Common myeloid progenitor, CD34-positive (primary cell): ENCODE measurements at regions of chr15 and their contacts with region 1.

Region 1: DNA sequence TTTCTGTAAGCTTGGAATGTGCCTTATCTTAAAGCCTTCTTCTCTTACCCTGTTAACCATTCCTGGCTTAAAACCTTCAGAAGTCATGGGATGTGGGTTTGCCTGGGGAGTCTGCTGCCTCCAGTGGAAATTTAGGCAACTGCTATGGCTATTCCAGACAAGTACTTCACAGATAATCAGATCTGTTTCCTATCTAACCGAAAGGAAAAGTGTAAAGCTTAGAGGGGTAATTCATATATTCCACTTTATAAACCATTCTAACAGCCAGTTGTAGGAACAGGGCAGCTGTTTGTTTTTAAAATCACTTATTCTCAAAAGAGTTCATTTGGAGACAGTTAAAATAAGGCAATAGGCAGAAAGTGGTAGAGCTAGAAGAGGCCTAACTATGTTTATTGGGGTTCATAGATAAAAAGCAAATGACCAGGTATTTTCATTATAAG is 219.9 kb downstream of the TCF12 start:
- DNase-seq: peak; percentile 60 to 72 (median 65)
- H3K4me3 ChIP-seq: no peak overlapping the region
- H3K27ac ChIP-seq: no peak overlapping the region
- H3K4me1 ChIP-seq: peaks cover 26 to 43% (median 31%) of the 10 kb centered on the region in 4 experiments
- H3K27me3 ChIP-seq: no peaks in the 10 kb centered on the region

Region 2: GRCh38 chr15:57114070-57114469 is 24.3 kb before region 1 on chr15:
- CTCF ChIA-PET with region 1: interaction called, 26 read pairs
- POLR2A ChIA-PET with region 1: no interaction called
- DNase-seq: peak; percentile 86 to 98 (median 98)
- H3K4me3 ChIP-seq: peak overlapping the region in 3 of 7 experiments; percentile 2 to 25 (median 12)
- H3K27ac ChIP-seq: peak overlapping the region; percentile 34 to 72
- H3K4me1 ChIP-seq: peaks cover 7 to 61% (median 16%) of the 10 kb centered on the region in 4 experiments
- H3K27me3 ChIP-seq: no peaks in the 10 kb centered on the region